HEK293 (cell line): ENCODE measurements at regions of chr19 and their contacts with region 1.

Region 1: GRCh38 chr19:50050384-50051224 is 24.8 kb downstream of the ZNF473 start:
- H3K4me3 ChIP-seq: peak overlapping the region; percentile 55
- H3K27ac ChIP-seq: no peak overlapping the region
- H3K4me1 ChIP-seq: no peaks in the 10 kb centered on the region
- CTCF ChIP-seq: no peak

Region 2: GRCh38 chr19:49877879-49878743 is 172.5 kb before region 1 on chr19:
- CTCF ChIA-PET with region 1: no interaction called
- POLR2A ChIA-PET with region 1: no interaction called
- H3K4me3 ChIP-seq: peak overlapping the region; percentile 79
- H3K27ac ChIP-seq: peak overlapping the region; percentile 94
- H3K4me1 ChIP-seq: peaks cover 9% of the 10 kb centered on the region
- CTCF ChIP-seq: 0 out of 2 replicates have a peak, but pooled peaks have one; percentile 10

Region 3: GRCh38 chr19:50025024-50025789 is 25.4 kb before region 1 on chr19 and contains the start of gene VRK3:
- CTCF ChIA-PET with region 1: interaction called, 17 read pairs
- POLR2A ChIA-PET with region 1: interaction called, 12 read pairs
- H3K4me3 ChIP-seq: peak within 1 kb of the TSS; percentile 90
- H3K27ac ChIP-seq: peak within 1 kb of the TSS; percentile 47; the same call in 1 of the 2 replicates
- H3K4me1 ChIP-seq: peaks cover 6% of the 10 kb centered on the region
- CTCF ChIP-seq: peak; percentile 61

Region 4: DNA sequence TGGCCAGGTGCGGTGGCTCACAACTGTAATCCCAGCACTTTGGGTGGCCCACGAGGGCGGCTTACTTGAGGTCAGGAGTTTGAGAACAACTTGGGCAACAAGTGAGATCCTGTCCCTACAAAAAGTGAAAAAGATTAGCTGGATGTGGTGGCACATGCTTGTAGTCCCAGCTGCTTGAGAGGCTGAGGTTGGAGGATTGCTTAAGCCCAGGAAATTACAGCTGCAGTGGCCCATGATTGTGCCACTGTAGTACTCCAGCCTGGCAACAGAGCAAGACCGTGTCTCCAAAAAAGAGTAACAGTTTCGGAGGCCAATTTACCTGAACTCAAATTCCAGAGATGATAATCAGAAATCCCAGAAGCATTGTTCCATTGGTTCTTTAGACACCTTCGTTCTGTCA is 20.4 kb before region 1 on chr19:
- CTCF ChIA-PET with region 1: interaction called, 17 read pairs
- POLR2A ChIA-PET with region 1: interaction called, 12 read pairs
- H3K4me3 ChIP-seq: no peak overlapping the region
- H3K27ac ChIP-seq: no peak overlapping the region
- H3K4me1 ChIP-seq: no peaks in the 10 kb centered on the region
- CTCF ChIP-seq: no peak